Naive thymus-derived CD4-positive, alpha-beta T cell (primary cell): ENCODE measurements at regions of chr11 and their contacts with region 1.

Region 1: GRCh38 chr11:93159721-93160120 is 38.1 kb downstream of the SLC36A4 start:
- DNase-seq: no peak
- ATAC-seq: no peak
- H3K4me3 ChIP-seq: no peak overlapping the region
- H3K4me3 Mint-ChIP-seq: no peak overlapping the region
- H3K27ac ChIP-seq: no peak overlapping the region
- H3K27ac Mint-ChIP-seq: no peak overlapping the region
- H3K4me1 ChIP-seq: no peaks in the 10 kb centered on the region
- H3K4me1 Mint-ChIP-seq: no peaks in the 10 kb centered on the region
- H3K27me3 ChIP-seq: no peaks in the 10 kb centered on the region
- H3K27me3 Mint-ChIP-seq: no peaks in the 10 kb centered on the region

Region 2: GRCh38 chr11:92980312-92980711 is 179.4 kb before region 1 on chr11:
- CTCF ChIA-PET with region 1: no interaction called
- POLR2A ChIA-PET with region 1: no interaction called
- intact Hi-C with region 1: no loop called
- DNase-seq: no peak
- ATAC-seq: no peak
- H3K4me3 ChIP-seq: no peak overlapping the region
- H3K4me3 Mint-ChIP-seq: no peak overlapping the region
- H3K27ac ChIP-seq: no peak overlapping the region
- H3K27ac Mint-ChIP-seq: no peak overlapping the region
- H3K4me1 ChIP-seq: no peaks in the 10 kb centered on the region
- H3K4me1 Mint-ChIP-seq: no peaks in the 10 kb centered on the region
- H3K27me3 ChIP-seq: no peaks in the 10 kb centered on the region
- H3K27me3 Mint-ChIP-seq: peaks cover 0 to 24% (median 0%) of the 10 kb centered on the region in 5 donors

Region 3: DNA sequence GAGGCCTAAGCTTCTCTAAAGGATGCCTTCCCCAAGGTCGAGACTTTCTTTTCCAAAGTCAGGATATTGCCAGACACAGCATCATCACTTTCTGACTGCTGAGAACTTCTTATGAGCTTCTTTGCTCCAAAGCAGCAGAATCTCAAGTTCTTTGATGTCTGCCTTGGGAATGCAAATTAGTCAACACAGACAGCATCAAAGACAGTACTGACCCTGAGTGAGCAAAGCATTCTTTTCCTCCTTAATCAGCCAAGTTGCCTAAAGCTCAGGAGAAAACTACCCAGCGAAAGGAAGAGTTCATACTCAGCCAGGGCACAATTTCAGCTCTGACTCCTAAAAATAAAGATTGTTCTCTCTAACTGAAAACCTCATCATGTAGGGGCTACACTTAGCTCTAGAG is 59.9 kb before region 1 on chr11:
- CTCF ChIA-PET with region 1: no interaction called
- POLR2A ChIA-PET with region 1: no interaction called
- intact Hi-C with region 1: loop called in 1 of 2 experiments (anchors 10 kb)
- DNase-seq: no peak
- ATAC-seq: no peak
- H3K4me3 ChIP-seq: no peak overlapping the region
- H3K4me3 Mint-ChIP-seq: no peak overlapping the region
- H3K27ac ChIP-seq: no peak overlapping the region
- H3K27ac Mint-ChIP-seq: no peak overlapping the region
- H3K4me1 ChIP-seq: no peaks in the 10 kb centered on the region
- H3K4me1 Mint-ChIP-seq: no peaks in the 10 kb centered on the region
- H3K27me3 ChIP-seq: no peaks in the 10 kb centered on the region
- H3K27me3 Mint-ChIP-seq: peaks cover 0 to 27% (median 8%) of the 10 kb centered on the region in 5 donors

Region 4: GRCh38 chr11:93143800-93144199 is 15.9 kb before region 1 on chr11:
- CTCF ChIA-PET with region 1: no interaction called
- POLR2A ChIA-PET with region 1: no interaction called
- intact Hi-C with region 1: no loop called
- DNase-seq: no peak
- ATAC-seq: no peak
- H3K4me3 ChIP-seq: no peak overlapping the region
- H3K4me3 Mint-ChIP-seq: no peak overlapping the region
- H3K27ac ChIP-seq: no peak overlapping the region
- H3K27ac Mint-ChIP-seq: no peak overlapping the region
- H3K4me1 ChIP-seq: no peaks in the 10 kb centered on the region
- H3K4me1 Mint-ChIP-seq: peaks cover 0 to 10% (median 0%) of the 10 kb centered on the region in 7 donors
- H3K27me3 ChIP-seq: no peaks in the 10 kb centered on the region
- H3K27me3 Mint-ChIP-seq: no peaks in the 10 kb centered on the region